ENCODE measurements at regions of chr11 and their contacts with region 1.

Region 1: GRCh38 chr11:122505304-122506006 is 150.1 kb upstream of the UBASH3B start:
- DNase-seq: peak; percentile 60
- ATAC-seq: peak; percentile 81
- H3K4me3 Mint-ChIP-seq: no peak overlapping the region
- H3K27ac Mint-ChIP-seq: no peak overlapping the region
- H3K4me1 Mint-ChIP-seq: no peaks in the 10 kb centered on the region
- H3K27me3 Mint-ChIP-seq: peaks cover 12% of the 10 kb centered on the region

Region 2: DNA sequence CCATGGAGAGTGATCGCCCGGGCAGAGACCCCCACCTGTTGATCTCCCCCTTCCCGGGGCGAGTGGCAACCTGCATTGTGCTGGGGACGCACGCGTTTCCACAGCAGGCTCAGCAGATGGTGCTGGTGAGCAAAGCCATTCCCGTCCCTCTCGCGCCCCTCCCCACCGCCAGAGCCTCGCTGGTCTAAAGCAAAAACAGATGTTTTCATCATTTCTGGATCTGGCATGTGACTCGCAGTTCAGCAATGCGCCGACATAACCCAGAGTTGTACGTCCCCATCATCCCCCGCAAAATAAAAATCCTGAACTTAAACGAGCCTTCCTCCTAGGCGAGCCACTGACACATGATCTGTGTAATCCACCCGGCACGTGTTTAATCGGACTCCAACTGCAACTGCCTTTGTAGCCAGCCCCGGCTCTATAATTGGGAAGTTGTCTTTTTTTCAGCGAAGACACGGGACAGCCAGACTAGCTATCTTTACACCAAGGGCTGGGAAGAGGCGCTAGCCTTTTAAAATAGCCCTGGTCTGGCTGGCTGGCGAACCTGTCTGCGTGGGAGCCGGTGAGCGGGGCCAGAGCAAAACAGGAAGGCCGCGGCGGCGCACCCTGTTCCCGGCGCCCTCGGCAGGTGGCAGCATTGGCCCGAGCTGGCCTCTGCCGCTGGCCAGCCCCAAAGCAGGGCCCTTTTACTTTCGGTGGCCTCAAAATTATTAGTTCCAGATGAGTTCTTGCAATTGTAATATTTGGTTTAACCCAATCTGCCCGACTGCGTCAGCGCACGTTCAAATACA is 849.7 kb before region 1 on chr11:
- CTCF ChIA-PET with region 1: interaction called, 14 read pairs
- POLR2A ChIA-PET with region 1: no interaction called
- DNase-seq: peak; percentile 70
- ATAC-seq: peak; percentile 92
- H3K4me3 Mint-ChIP-seq: peak overlapping the region; percentile 62
- H3K27ac Mint-ChIP-seq: no peak overlapping the region
- H3K4me1 Mint-ChIP-seq: peaks cover 21% of the 10 kb centered on the region
- H3K27me3 Mint-ChIP-seq: peaks cover 3% of the 10 kb centered on the region

Region 3: GRCh38 chr11:122215244-122215992 is 290.0 kb before region 1 on chr11:
- CTCF ChIA-PET with region 1: interaction called, 17 read pairs
- POLR2A ChIA-PET with region 1: no interaction called
- DNase-seq: peak; percentile 44
- ATAC-seq: peak; percentile 70
- H3K4me3 Mint-ChIP-seq: no peak overlapping the region
- H3K27ac Mint-ChIP-seq: no peak overlapping the region
- H3K4me1 Mint-ChIP-seq: no peaks in the 10 kb centered on the region
- H3K27me3 Mint-ChIP-seq: no peaks in the 10 kb centered on the region

Measured in activated CD8-positive, alpha-beta T cell treated with anti-CD3 and anti-CD28 coated beads, Interleukin-2, amount 10 ng/mL, durations not matched to agents 7 days and 5 days (primary cell).